ENCODE measurements at regions of chr11 and their contacts with region 1.

Region 1: DNA sequence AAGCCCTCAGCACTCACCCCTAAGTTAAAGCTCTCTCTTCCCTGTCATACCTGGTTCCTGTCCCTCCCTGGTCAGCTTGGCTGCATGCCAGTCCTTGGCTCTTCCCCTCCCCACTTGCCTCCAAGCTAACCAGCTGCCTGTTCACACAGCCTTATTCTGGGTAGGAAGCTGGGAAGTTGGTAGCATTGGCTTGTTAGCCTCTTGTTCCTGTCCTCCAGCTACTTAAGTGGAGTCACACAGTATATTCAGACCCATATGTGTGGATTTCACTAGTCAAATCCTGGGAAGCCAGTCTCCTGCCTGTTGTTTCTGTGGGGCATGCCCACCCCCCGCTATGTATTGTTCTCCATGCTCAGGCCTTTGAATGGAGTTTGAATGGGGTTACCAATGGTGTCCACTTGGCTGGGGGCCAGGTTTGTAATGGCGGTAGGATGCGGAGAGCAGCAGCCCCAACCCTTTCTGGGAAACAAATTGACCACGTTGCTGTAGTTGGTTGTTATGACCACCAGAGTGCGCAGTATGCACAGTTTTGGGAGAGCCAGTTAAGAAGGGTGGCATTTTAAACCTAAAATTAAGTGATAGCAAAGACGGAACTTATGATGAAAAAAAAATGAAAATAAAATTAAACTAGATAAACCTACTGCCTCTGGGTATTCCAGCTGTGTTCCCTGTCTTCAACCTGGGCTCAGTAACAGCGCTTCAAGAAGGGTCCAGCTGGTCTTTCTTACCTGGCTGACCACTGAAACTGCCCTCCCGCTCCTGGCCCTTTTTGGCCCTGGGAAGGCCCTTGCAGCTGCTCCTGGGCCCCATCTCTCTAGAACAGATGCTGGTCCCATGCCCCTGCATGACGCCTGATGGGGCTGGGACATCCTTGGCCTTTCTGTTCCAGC is 10.7 kb upstream of the RPS3 start:
- DNase-seq: peak; percentile 81 to 93 (median 89)
- H3K4me3 ChIP-seq: peak overlapping the region in 1 of 7 experiments; percentile 52
- H3K27ac ChIP-seq: no peak overlapping the region
- H3K4me1 ChIP-seq: peaks cover under 1 to 18% (median 17%) of the 10 kb centered on the region in 4 experiments
- H3K27me3 ChIP-seq: no peaks in the 10 kb centered on the region

Region 2: GRCh38 chr11:75133976-75134375 is 254.7 kb before region 1 on chr11:
- CTCF ChIA-PET with region 1: no interaction called
- POLR2A ChIA-PET with region 1: no interaction called
- DNase-seq: peak in 1 of 3 donors; percentile 16
- H3K4me3 ChIP-seq: no peak overlapping the region
- H3K27ac ChIP-seq: no peak overlapping the region
- H3K4me1 ChIP-seq: no peaks in the 10 kb centered on the region
- H3K27me3 ChIP-seq: peaks cover 0 to 9% (median 0%) of the 10 kb centered on the region in 5 experiments

Region 3: GRCh38 chr11:75289919-75290318 is 98.7 kb before region 1 on chr11:
- CTCF ChIA-PET with region 1: interaction called, 265 read pairs
- POLR2A ChIA-PET with region 1: no interaction called
- DNase-seq: no peak
- H3K4me3 ChIP-seq: no peak overlapping the region
- H3K27ac ChIP-seq: no peak overlapping the region
- H3K4me1 ChIP-seq: peaks cover 0 to 18% (median 11%) of the 10 kb centered on the region in 4 experiments
- H3K27me3 ChIP-seq: no peaks in the 10 kb centered on the region

Region 4: DNA sequence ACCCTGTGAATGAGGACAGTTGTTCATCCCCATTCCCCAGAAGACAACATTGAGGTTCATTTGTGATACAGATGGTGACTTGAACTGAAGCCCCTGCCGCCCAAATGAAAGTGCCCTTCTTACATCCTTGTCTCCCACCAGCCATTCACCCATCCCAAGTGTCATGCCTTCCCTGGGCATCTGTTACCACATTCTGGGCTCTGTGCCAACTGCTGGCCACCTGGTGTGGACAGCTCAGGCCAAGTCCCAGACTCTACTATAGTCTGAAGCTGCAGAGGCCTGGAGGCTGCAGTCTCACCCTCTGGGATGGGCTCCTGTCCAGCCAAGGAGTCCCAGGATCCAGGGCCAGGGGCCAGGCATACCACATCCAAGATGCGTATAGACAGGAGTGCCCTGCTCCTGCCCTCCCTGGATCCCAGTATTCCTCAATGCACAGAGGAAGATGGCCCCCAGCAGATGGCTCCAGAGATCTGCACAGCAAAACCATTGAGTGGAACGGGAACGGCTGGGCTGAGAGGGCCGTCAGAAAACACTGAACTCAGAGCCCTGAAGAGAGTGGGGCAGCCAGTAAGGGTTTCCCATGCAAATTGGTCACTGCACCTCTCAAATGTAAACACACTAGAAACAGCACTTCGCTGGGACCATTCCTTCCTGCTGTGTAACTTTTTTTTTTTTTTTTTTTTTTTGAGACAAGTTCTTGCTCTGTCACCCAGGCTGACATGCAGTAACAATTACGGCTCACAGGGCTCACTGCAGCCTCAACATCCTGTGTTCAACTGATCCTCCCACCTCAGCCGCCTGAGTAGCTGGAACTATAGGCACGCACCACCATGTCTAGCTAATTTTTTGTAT is 60.0 kb before region 1 on chr11:
- CTCF ChIA-PET with region 1: interaction called, 455 read pairs
- POLR2A ChIA-PET with region 1: no interaction called
- DNase-seq: peak; percentile 93 to 97 (median 95)
- H3K4me3 ChIP-seq: peak overlapping the region in 3 of 7 experiments; percentile 13 to 32 (median 19)
- H3K27ac ChIP-seq: peak overlapping the region; percentile 62 to 86
- H3K4me1 ChIP-seq: peaks cover 8 to 67% (median 58%) of the 10 kb centered on the region in 4 experiments
- H3K27me3 ChIP-seq: no peaks in the 10 kb centered on the region

Region 5: GRCh38 chr11:75371941-75372789 is 16.5 kb before region 1 on chr11:
- CTCF ChIA-PET with region 1: interaction called, 25 read pairs
- POLR2A ChIA-PET with region 1: no interaction called
- DNase-seq: no peak
- H3K4me3 ChIP-seq: peak overlapping the region in 1 of 7 experiments; percentile 2
- H3K27ac ChIP-seq: peak overlapping the region in 1 of 2 experiments; percentile 34
- H3K4me1 ChIP-seq: peaks cover 0 to 59% (median 22%) of the 10 kb centered on the region in 4 experiments
- H3K27me3 ChIP-seq: no peaks in the 10 kb centered on the region

Region 6: DNA sequence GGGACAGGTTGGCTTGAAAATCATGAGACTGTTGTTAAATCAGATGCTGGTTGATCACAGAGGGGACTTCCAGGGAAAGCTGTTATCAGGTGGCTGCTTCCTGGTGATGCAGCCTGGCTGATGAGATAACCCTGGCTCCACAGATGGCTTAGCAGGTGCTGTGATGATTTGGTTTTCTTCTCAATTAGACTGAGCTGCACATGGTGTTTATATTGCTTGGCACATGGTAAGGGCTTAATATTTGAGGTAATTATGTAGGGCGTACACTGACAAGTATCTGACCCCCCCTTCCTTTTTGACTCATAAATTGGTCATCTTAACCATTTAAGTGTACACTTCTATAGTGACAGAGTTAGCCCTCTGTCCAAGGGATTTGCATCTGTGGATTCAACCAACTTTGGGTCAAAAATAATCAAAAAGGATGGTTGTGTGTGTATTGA is 17.7 kb after region 1 on chr11:
- CTCF ChIA-PET with region 1: interaction called, 32 read pairs
- POLR2A ChIA-PET with region 1: no interaction called
- DNase-seq: peak; percentile 65 to 87 (median 85)
- H3K4me3 ChIP-seq: no peak overlapping the region
- H3K27ac ChIP-seq: peak overlapping the region in 1 of 2 experiments; percentile 9
- H3K4me1 ChIP-seq: peaks cover 10 to 37% (median 24%) of the 10 kb centered on the region in 4 experiments
- H3K27me3 ChIP-seq: no peaks in the 10 kb centered on the region

Region 7: DNA sequence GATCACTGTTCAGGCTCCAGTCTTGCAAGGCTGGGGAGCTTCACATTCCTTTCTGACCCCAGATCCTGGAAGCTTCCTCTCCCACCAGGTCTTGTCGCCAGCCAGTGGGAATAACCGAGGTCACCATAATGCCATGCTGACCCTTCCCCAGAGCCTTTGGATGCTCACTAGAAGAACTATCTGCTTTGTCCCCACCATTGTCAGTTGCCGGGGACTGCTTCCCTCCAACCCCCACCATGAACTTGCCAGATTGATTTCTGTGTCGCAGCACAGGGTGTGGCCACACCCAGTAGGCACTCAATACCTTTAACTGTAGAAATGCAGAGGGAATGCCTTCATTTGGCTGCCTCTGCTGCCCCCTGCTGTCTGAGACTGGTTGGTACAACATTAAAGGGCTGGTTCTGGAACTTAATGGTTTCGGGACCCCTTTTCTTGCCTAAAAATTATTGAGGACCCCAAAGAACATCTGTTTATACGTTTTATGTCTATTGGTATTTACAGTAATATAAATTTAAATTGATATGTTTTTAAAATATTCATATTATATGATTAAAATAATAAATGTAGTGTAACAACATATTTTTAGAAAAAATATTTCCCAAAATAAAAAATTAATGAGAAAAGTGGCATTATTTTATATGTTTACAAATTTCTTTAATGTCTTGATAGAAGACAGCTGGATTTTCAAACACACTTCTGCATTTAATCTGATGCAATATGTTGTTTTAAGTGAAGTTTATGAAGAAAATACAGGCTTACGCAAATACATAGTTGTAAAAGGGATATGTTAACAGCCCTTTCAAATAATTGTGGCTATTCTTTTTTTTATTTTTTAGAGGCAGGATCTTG is 143.8 kb after region 1 on chr11:
- CTCF ChIA-PET with region 1: interaction called, 32 read pairs
- POLR2A ChIA-PET with region 1: no interaction called
- DNase-seq: peak; percentile 65 to 86 (median 81)
- H3K4me3 ChIP-seq: no peak overlapping the region
- H3K27ac ChIP-seq: no peak overlapping the region
- H3K4me1 ChIP-seq: peaks cover 3 to 25% (median 22%) of the 10 kb centered on the region in 4 experiments
- H3K27me3 ChIP-seq: no peaks in the 10 kb centered on the region

Region 8: GRCh38 chr11:75597636-75598035 is 209.0 kb after region 1 on chr11:
- CTCF ChIA-PET with region 1: no interaction called
- POLR2A ChIA-PET with region 1: no interaction called
- DNase-seq: peak; percentile 22 to 41 (median 38)
- H3K4me3 ChIP-seq: no peak overlapping the region
- H3K27ac ChIP-seq: no peak overlapping the region
- H3K4me1 ChIP-seq: peaks cover 0 to 8% (median 5%) of the 10 kb centered on the region in 4 experiments
- H3K27me3 ChIP-seq: peaks cover 0 to 3% (median 0%) of the 10 kb centered on the region in 5 experiments